ENCODE measurements at regions of chr10 and their contacts with region 1.

Region 1: GRCh38 chr10:117411479-117412399 is 36.5 kb upstream of the PDZD8 start:
- DNase-seq: no peak
- H3K4me3 ChIP-seq: no peak overlapping the region
- H3K27ac ChIP-seq: no peak overlapping the region
- H3K27me3 ChIP-seq: no peaks in the 10 kb centered on the region
- CTCF ChIP-seq: no peak

Region 2: DNA sequence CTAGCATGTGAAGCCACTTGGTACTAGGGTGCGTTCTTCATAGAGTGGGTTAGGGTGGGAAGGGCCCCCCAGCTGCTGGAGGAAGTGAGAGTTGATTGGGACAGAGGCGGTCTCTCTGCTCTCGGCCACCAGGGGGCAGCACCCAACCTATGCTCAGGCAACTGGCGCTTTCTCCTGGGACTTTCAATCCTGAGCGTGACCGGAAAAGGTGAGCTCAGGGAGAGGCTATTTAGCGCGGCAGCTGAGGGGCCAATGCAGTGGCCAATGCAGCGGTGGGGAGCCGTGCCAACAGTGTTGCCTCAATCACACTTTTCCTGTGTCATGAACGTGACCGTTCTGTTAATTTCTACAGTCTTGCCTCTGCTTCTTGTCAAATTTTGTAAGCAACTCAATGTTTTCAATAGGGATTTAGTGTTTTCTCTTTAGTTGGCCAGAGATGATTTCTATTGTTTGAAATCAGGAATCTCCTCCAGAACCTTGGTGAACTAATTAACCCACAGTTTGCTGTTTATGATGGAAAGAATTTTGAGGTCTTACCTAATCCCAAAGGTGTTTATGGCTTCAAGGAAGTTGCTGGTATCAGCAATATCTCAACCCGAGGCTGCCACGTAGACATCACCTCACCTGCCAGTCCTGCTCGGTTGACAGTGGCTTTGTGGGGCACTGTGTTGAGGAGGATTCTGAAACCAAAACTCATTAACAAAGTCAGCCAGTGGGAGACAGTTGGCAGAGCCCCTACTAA is 31.4 kb after region 1 on chr10:
- CTCF ChIA-PET with region 1: interaction called, 14 read pairs
- POLR2A ChIA-PET with region 1: no interaction called
- DNase-seq: no peak
- H3K4me3 ChIP-seq: no peak overlapping the region
- H3K27ac ChIP-seq: no peak overlapping the region
- H3K27me3 ChIP-seq: no peaks in the 10 kb centered on the region
- CTCF ChIP-seq: peak; percentile 71

Region 3: GRCh38 chr10:117677890-117678500 is 266.3 kb after region 1 on chr10:
- CTCF ChIA-PET with region 1: no interaction called
- POLR2A ChIA-PET with region 1: no interaction called
- DNase-seq: no peak
- H3K4me3 ChIP-seq: no peak overlapping the region
- H3K27ac ChIP-seq: no peak overlapping the region
- H3K27me3 ChIP-seq: no peaks in the 10 kb centered on the region
- CTCF ChIP-seq: no peak